Right cardiac atrium (tissue), 5 donors: ENCODE measurements at regions of chr6 and their contacts with region 1.

Region 1: DNA sequence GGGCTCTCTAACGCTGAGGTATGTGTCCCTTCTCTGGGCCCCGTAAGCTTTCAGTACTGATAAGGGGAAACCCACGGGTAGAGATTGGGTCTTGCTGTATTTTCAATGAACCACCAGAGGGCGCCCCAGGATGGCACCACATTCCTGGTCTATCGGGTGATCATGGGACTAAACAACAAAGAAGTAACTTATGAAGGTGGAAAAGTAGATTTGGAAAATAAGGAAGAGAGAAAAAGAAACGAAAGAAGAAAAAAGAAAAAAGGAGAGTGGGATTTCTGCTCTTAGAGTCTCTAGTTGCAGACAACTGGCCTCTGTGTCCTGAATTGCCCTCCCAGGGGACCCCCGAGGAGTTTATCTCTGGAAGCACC is 93.8 kb downstream of the GMPR start:
- DNase-seq: peak; percentile 70 to 81 (median 77)
- ATAC-seq: peak; percentile 80 to 86
- H3K4me3 ChIP-seq: no peak overlapping the region
- H3K27ac ChIP-seq: peak overlapping the region; percentile 59
- H3K4me1 ChIP-seq: peaks cover 6% of the 10 kb centered on the region
- H3K27me3 ChIP-seq: no peaks in the 10 kb centered on the region

Region 2: GRCh38 chr6:15062516-15063252 is 1269.5 kb before region 1 on chr6:
- intact Hi-C with region 1: no loop called
- DNase-seq: no peak
- ATAC-seq: peak; percentile 64 to 73
- H3K4me3 ChIP-seq: no peak overlapping the region
- H3K27ac ChIP-seq: no peak overlapping the region
- H3K4me1 ChIP-seq: peaks cover 4% of the 10 kb centered on the region
- H3K27me3 ChIP-seq: no peaks in the 10 kb centered on the region

Region 3: GRCh38 chr6:15776458-15776980 is 555.6 kb before region 1 on chr6:
- intact Hi-C with region 1: no loop called
- DNase-seq: no peak
- ATAC-seq: no peak
- H3K4me3 ChIP-seq: no peak overlapping the region
- H3K27ac ChIP-seq: no peak overlapping the region
- H3K4me1 ChIP-seq: no peaks in the 10 kb centered on the region
- H3K27me3 ChIP-seq: no peaks in the 10 kb centered on the region

Region 4: DNA sequence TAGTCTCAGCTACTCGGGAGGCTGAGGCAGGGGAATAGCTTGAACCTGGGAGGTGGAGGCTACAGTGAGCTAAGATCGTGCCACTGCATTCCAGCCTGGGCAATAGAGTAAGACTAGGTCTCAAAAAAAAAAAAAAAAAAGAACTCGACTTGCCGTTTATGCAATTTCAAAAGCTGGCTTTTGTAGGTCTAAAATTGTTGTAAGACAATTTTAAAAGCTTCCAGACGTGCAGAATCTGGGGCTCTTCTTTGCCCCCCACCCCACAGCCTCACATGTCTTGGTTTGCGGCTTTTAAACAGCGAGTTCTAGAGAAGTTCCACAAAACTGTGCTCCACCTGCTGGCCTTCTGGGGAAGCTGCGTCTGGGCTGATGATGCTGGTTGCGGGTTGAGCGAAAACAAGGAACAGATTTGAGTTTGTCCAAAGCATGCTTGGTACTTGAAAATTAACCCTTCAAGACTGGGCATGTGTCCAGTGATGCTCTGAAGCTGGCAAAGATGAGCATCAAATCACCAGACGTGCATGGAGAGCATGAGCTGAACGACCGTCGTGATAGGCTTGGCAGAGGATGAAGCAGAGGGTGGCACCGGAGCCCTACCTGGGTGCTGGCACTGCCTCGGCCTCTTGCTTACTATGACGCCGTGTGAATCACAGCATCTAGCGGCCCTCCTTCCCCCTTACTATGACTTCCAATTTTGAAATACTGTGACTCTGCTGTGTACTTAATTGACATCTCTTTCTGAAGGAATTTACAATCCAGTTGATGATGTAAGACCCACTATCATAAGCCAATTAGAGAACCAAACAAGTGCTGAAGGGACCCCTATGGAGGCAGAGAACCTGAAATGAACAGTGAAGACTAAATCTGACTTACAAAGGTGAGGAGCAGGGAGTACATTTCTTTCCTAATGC is 77.6 kb after region 1 on chr6:
- intact Hi-C with region 1: loop called (anchors 2 to 10 kb)
- DNase-seq: peak; percentile 45 to 80 (median 78)
- ATAC-seq: peak; percentile 48 to 70
- H3K4me3 ChIP-seq: no peak overlapping the region
- H3K27ac ChIP-seq: no peak overlapping the region
- H3K4me1 ChIP-seq: peaks cover 2% of the 10 kb centered on the region
- H3K27me3 ChIP-seq: no peaks in the 10 kb centered on the region

Region 5: DNA sequence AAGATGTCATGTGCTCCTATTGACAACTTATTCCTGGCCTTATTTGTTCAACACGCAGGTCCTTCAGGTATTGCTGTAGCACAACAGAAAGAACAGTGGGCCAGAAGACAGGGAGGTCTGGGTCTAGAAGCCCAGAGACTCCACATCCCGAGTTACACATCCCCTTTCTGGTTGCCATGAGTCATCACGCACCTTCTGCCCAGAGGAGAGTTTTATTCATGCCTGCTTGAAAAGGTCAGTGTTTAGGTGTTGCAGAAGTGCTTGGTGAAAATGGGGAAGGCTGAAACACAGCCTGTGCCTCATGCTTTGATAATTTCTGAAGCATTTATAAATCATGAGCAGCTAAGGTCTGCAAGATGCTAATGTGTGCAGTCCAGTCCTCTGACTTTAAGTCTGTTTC is 162.6 kb after region 1 on chr6:
- intact Hi-C with region 1: loop called in 1 of 4 experiments (anchors 10 kb)
- DNase-seq: no peak
- ATAC-seq: peak in 1 of 2 donors; percentile 43
- H3K4me3 ChIP-seq: no peak overlapping the region
- H3K27ac ChIP-seq: no peak overlapping the region
- H3K4me1 ChIP-seq: peaks cover 2% of the 10 kb centered on the region
- H3K27me3 ChIP-seq: no peaks in the 10 kb centered on the region

Region 6: DNA sequence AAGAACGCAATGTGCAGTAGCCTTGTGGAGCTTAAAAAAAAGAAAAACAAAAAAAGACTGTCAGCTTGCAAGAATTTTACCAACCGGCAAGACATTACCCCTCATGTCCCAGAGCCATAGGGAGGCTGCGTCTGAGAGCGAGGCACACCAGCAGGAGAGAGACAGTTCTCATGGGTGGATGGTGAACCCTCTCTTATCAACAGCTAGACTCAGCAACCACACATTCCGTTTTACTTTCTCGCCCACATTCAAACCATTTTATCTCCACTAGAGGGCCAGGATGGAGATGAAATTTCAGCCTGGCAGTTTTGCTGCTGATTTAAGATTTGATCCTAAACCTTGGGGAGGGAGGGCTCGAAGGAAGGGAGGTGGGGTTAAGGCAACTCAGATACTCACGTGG is 182.1 kb after region 1 on chr6:
- intact Hi-C with region 1: loop called in 1 of 4 experiments (anchors 10 kb)
- DNase-seq: no peak
- ATAC-seq: peak; percentile 58 to 61
- H3K4me3 ChIP-seq: no peak overlapping the region
- H3K27ac ChIP-seq: no peak overlapping the region
- H3K4me1 ChIP-seq: peaks cover 10% of the 10 kb centered on the region
- H3K27me3 ChIP-seq: no peaks in the 10 kb centered on the region